RWPE1 (cell line): ENCODE measurements at regions of chr1 and their contacts with region 1.

Region 1: GRCh38 chr1:199684686-199685273 is 342.7 kb upstream of the NR5A2 start:
- DNase-seq: peak; percentile 88
- H3K27ac ChIP-seq: no peak overlapping the region
- CTCF ChIP-seq: peak; percentile 86

Region 2: DNA sequence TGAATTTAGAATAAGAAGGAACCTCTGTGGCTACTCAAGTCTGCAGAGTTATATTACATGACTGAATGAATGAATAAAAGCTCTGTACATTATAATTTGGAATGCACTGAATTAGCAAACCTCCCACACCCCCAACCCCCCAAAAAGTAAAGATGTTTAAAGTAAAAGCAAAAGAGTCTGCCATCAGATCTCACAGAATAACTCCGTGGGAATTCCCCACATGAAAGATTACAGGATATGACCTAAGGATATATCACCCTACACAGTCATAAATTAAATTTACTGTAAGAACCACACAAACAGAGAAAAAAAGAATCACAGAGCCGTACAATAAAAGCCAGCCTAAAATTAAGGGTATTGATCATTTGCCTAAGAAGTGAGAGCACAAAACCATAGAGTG is 458.6 kb before region 1 on chr1:
- CTCF ChIA-PET with region 1: no interaction called
- POLR2A ChIA-PET with region 1: no interaction called
- DNase-seq: peak; percentile 48
- H3K27ac ChIP-seq: no peak overlapping the region
- CTCF ChIP-seq: no peak

Region 3: DNA sequence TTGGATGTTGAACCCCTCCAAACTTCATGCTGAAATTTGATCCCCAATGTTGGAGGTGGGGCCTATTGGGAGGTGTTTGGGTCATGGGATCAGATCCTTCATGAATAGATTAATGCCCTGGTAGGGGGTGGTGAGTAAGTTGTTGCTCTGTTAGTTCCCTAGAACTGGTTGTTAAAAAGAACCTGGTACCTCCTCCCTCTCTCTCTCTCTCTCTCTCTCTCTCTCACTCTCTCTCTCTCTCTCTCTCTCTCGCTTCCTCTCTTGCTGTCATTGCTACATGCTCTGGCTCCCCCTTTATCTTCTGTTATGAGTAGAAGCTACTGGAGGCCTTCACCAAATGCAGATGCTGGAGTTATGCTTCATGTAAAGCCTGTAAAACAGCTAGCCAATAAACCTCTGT is 155.5 kb before region 1 on chr1:
- CTCF ChIA-PET with region 1: no interaction called
- POLR2A ChIA-PET with region 1: no interaction called
- DNase-seq: no peak
- H3K27ac ChIP-seq: no peak overlapping the region
- CTCF ChIP-seq: no peak

Region 4: DNA sequence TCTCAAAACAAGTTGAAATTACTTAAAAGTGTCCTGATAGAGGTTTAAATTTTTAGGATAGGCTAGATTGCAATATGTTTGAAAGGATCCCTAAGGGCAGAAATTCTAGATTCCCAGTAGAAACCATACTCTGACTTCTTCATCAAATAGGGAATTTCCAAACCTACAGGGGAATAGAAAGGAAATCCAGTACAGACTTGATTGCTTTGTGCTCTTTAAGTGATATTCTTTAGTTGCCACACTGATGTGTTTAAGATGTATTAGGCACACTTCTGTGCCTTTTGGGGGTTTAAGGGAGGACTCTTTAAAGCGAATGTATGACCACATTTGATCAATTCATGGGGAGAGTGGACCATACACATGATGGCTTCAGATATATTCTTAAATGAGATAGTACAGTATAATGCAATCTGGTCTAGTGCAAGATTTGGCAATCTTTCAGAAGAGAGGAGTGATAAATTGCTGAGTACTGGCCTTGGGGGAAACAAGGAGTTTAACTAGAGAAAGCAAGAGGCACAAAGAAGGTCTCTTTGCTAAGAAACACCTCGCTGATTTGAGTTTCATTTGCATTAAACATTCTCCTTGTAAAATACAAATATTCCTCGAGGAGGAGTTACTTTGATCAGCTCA is 74.0 kb after region 1 on chr1:
- CTCF ChIA-PET with region 1: no interaction called
- POLR2A ChIA-PET with region 1: no interaction called
- DNase-seq: no peak
- H3K27ac ChIP-seq: no peak overlapping the region
- CTCF ChIP-seq: no peak

Region 5: DNA sequence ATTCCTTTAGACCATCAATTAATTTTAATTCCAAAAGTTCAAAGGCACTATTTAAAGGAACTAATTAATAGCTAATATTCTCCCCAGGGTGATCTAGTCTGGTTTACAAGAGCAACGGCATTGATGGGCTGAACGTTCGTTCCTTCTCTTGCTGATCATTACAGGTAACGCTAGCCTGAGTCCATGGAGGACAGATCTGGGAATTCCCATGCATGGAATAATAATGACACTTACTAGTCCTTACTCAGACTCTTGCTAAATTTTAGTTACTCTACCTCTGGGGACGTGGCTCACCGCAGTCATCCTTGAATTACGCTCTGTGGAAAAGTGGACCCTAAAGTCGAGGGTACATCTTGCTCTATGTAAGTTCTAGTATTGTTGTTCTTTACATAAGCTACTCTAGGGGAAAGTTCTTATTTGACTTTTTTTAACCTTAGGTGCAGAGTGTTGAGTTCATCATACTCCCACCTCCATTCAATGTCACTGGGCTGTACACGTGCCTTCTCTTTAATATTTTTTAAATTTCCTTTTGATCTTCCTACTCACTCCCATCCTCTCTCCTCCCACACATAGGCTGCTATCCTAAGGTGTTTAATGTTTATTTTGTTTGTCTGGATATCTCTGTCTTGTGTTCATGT is 591.2 kb after region 1 on chr1:
- CTCF ChIA-PET with region 1: interaction called, 10 read pairs
- POLR2A ChIA-PET with region 1: no interaction called
- DNase-seq: no peak
- H3K27ac ChIP-seq: no peak overlapping the region
- CTCF ChIP-seq: no peak